HEK293 (cell line): ENCODE measurements at regions of chr12 and their contacts with region 1.

Region 1: GRCh38 chr12:118213452-118213851 is 77.5 kb downstream of the PEBP1 start:
- H3K4me3 ChIP-seq: no peak overlapping the region
- H3K27ac ChIP-seq: no peak overlapping the region
- H3K4me1 ChIP-seq: no peaks in the 10 kb centered on the region
- CTCF ChIP-seq: no peak

Region 2: DNA sequence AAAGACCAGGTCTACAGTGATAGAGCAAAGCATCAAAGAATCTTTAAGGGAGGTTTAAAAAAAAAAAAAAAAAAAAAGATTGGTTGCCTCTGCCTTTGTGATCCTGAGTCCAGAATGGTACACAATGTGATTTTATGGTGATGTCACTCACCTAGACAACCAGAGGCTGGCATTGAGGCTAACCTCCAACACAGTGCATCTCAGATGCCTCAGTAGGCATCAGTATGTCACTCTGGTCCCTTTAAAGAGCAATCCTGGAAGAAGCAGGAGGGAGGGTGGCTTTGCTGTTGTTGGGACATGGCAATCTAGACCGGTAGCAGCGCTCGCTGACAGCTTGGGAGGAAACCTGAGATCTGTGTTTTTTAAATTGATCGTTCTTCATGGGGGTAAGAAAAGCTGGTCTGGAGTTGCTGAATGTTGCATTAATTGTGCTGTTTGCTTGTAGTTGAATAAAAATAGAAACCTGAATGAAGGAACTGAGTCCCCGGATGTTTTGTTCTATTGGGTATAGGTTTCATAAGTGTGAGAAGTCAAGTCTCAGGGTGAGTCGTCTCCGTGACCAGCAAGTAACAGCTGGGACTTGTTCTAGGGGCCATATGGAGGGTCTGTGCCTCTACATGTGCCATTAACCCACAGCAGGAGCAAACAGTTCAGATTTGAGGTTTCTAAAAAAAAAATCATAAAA is 68.2 kb before region 1 on chr12:
- CTCF ChIA-PET with region 1: no interaction called
- POLR2A ChIA-PET with region 1: no interaction called
- H3K4me3 ChIP-seq: no peak overlapping the region
- H3K27ac ChIP-seq: no peak overlapping the region
- H3K4me1 ChIP-seq: no peaks in the 10 kb centered on the region
- CTCF ChIP-seq: no peak

Region 3: DNA sequence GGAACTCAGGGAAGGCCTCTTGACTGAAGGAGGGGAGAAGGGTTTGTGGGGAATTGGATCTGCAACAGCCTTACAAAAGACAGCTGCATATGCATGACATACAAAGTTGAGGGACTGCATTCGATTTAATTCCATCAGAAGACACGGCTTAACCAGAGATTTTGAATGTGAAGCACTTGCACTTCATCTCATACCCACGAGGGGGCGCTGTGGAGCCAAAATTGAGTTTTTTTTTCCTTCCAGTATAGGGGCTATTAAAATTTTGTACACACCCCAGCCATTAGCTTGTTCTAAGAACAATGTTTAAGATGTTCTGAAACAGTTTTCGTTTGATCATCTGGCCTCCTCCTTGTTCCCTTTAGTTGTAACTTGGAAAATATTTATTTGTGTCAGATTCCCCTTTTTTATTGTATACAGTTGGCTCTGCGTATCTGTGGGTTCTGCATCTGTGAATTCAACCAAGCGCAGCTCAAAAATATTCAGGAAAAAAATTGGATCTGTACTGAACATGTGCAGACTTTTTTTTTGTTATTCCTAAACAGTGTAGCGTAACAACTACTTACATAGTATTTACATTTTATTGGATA is 164.5 kb after region 1 on chr12:
- CTCF ChIA-PET with region 1: interaction called, 13 read pairs
- POLR2A ChIA-PET with region 1: interaction called, 3 read pairs
- H3K4me3 ChIP-seq: peak overlapping the region; percentile 91
- H3K27ac ChIP-seq: peak overlapping the region; percentile 19
- H3K4me1 ChIP-seq: peaks cover 4% of the 10 kb centered on the region; the same call in 1 of the 2 replicates
- CTCF ChIP-seq: peak; percentile 71